H1 (cell line): ENCODE measurements at regions of chr11 and their contacts with region 1.

Region 1: GRCh38 chr11:57249384-57250319 is 12.6 kb upstream of the APLNR start:
- DNase-seq: peak in 1 of 2 experiments; percentile 87
- H3K4me3 ChIP-seq: no peak overlapping the region
- H3K27ac ChIP-seq: no peak overlapping the region
- H3K4me1 ChIP-seq: peaks cover 0 to 2% (median 0%) of the 10 kb centered on the region in 4 experiments; a peak in 1 of 7 replicates
- H3K27me3 ChIP-seq: no peaks in the 10 kb centered on the region
- CTCF ChIP-seq: peak; percentile 78 to 86 (median 84)
- EP300 ChIP-seq: no peak
- POLR2A ChIP-seq: no peak
- RAD21 ChIP-seq: peak; percentile 91 to 97

Region 2: GRCh38 chr11:57085611-57086010 is 164.0 kb before region 1 on chr11:
- CTCF ChIA-PET with region 1: interaction called, 13 read pairs
- POLR2A ChIA-PET with region 1: no interaction called
- DNase-seq: no peak
- H3K4me3 ChIP-seq: no peak overlapping the region
- H3K27ac ChIP-seq: no peak overlapping the region
- H3K4me1 ChIP-seq: no peaks in the 10 kb centered on the region
- H3K27me3 ChIP-seq: no peaks in the 10 kb centered on the region
- CTCF ChIP-seq: no peak
- EP300 ChIP-seq: no peak
- POLR2A ChIP-seq: no peak
- RAD21 ChIP-seq: no peak

Region 3: DNA sequence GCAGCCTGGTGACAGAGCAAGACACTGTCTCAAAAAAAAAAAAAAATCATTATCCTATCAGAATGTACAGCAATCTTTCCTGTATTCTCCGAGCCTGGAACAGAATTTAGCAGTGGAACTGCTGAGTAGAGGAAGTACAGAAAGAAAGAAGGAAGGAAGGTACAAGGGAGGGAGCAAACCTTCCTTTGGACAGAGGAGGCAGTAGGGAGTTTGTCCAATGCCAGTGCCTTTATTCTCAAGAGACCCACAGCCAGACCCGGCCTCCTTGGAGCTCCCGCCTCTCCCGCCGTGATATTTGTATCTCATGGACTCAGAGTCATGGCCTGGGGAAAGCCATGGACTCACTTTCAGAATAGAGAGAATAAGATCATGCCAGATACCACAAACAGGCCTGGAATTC is 105.6 kb before region 1 on chr11:
- CTCF ChIA-PET with region 1: interaction called, 942 read pairs
- POLR2A ChIA-PET with region 1: no interaction called
- DNase-seq: no peak
- H3K4me3 ChIP-seq: no peak overlapping the region
- H3K27ac ChIP-seq: no peak overlapping the region
- H3K4me1 ChIP-seq: no peaks in the 10 kb centered on the region
- H3K27me3 ChIP-seq: no peaks in the 10 kb centered on the region
- CTCF ChIP-seq: peak in 1 of 3 experiments; percentile 38; a peak in 1 of 4 replicates
- EP300 ChIP-seq: no peak
- POLR2A ChIP-seq: no peak
- RAD21 ChIP-seq: no peak

Region 4: GRCh38 chr11:57181678-57182305 is 67.9 kb before region 1 on chr11 and contains the start of gene LRRC55:
- CTCF ChIA-PET with region 1: interaction called, 30 read pairs
- POLR2A ChIA-PET with region 1: no interaction called
- DNase-seq: no peak
- H3K4me3 ChIP-seq: peak within 1 kb of the TSS; percentile 43 to 77 (median 62); a peak in 5 of 8 replicates
- H3K27ac ChIP-seq: no peak within 1 kb of the TSS
- H3K4me1 ChIP-seq: peaks cover 0 to 6% (median 3%) of the 10 kb centered on the region in 4 experiments; a peak in 5 of 7 replicates
- H3K27me3 ChIP-seq: peaks cover 3 to 27% (median 23%) of the 10 kb centered on the region in 4 experiments
- CTCF ChIP-seq: no peak
- EP300 ChIP-seq: no peak
- POLR2A ChIP-seq: no peak
- RAD21 ChIP-seq: no peak
- total RNA-seq, gene LRRC55: 1.1 and 1.4 TPM in 2 replicates

Region 5: GRCh38 chr11:57230791-57231538 is 18.7 kb before region 1 on chr11:
- CTCF ChIA-PET with region 1: interaction called, 47 read pairs
- POLR2A ChIA-PET with region 1: no interaction called
- DNase-seq: no peak
- H3K4me3 ChIP-seq: no peak overlapping the region
- H3K27ac ChIP-seq: no peak overlapping the region
- H3K4me1 ChIP-seq: peaks cover 0 to 4% (median 0%) of the 10 kb centered on the region in 4 experiments; a peak in 2 of 7 replicates
- H3K27me3 ChIP-seq: no peaks in the 10 kb centered on the region; a peak in 3 of 7 replicates
- CTCF ChIP-seq: no peak
- EP300 ChIP-seq: no peak
- POLR2A ChIP-seq: no peak
- RAD21 ChIP-seq: no peak

Region 6: DNA sequence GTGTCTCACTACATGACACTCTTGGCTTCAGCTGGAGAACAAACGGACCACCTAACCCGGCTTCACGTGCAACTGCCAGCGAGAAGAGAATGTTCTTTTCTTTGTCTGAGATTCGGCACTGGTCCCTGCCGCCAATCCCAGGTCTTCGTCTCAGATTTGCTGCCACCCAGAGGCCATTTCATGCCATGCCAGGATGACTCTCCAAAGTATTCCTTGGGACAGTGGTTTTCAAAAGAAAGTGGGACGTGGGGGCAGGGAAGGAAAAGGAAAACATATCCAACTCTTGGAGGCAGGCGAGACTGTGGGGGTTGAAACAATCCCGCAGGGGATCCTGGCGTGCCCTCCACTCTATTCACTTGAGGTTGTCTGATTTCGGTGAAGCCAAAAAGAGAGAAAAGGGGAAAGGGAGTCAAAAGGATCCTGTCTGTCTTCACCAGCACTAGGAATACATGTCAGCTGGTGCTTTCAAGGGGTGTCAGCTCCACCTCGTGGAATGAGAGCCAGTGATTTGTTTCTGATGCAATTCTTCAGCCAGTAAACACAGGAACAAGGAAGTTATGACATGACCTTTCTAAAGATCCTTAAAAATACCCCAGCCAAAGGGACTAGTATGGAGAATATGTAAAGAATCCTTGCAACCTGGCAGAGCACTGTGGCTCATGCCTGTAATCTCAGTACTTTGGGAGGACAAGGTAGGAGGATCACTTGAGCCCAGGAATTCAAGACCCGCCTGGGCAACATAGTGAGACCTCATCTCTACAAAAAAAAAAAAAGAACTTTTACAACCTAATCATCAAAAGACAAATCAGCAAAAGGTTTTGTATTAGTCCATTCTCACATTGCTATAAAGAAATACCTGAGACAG is 28.4 kb after region 1 on chr11:
- CTCF ChIA-PET with region 1: interaction called, 41 read pairs
- POLR2A ChIA-PET with region 1: interaction called, 3 read pairs
- DNase-seq: peak; percentile 43 to 84
- H3K4me3 ChIP-seq: peak overlapping the region in 1 of 4 experiments; percentile 37; a peak in 3 of 8 replicates
- H3K27ac ChIP-seq: peak overlapping the region; percentile 37; the same call in 1 of the 2 replicates
- H3K4me1 ChIP-seq: peaks cover 2 to 10% (median 5%) of the 10 kb centered on the region in 4 experiments; a peak in 6 of 7 replicates
- H3K27me3 ChIP-seq: peaks cover 0 to 2% (median 0%) of the 10 kb centered on the region in 4 experiments; a peak in 3 of 7 replicates
- CTCF ChIP-seq: peak; percentile 71 to 91 (median 72)
- EP300 ChIP-seq: no peak
- POLR2A ChIP-seq: peak in 1 of 2 experiments; percentile 25; a peak in 1 of 3 replicates
- RAD21 ChIP-seq: peak; percentile 70 to 75

Region 7: DNA sequence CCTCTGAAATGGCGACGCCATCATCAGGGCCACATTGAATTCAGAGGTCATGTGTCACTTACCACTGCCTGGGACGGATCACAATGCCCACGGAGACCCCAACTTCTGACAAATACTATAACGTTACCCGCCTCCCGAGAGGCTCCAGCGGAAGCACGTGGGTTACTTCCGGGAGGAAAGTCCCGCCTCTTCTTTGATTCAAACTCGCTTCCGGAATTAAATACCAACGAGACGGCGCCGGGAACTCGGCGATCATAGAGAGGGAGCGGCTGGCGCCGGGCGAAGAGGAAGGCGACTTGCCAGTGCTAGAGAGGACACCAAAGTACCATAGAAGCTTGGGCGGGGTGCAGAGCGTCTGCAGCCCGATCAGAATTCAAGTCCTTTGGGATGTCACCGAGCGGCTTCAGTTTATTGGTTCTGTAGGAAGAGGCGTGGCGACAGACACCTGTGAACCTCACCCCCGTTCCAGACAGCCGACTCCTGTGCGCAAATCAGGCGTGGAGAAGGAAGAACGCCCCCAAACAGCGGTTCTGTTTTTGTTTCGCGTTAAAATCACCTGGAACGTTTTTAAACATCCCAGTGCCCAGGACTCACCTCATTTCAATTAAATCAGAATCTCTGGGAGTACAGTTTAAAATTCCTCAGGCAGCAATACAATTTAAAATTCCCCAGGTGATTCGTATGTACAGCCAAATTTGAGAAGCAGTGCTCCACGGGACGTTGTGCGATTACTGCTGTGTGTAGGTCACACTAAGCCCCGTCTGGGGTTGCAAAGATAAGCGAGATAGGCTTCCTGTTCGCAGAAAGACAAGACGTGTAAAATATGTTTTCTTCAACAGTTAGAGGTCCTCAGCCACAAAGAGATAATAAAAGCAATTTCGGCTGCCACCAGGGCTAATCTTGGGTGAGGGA is 281.2 kb after region 1 on chr11 and contains the start of gene TIMM10:
- CTCF ChIA-PET with region 1: no interaction called
- POLR2A ChIA-PET with region 1: no interaction called
- DNase-seq: peak; percentile 87 to 98
- H3K4me3 ChIP-seq: peak within 1 kb of the TSS; percentile 88 to 99 (median 96)
- H3K27ac ChIP-seq: peak within 1 kb of the TSS; percentile 49
- H3K4me1 ChIP-seq: peaks cover 0 to 7% (median 3%) of the 10 kb centered on the region in 4 experiments; a peak in 4 of 7 replicates
- H3K27me3 ChIP-seq: no peaks in the 10 kb centered on the region
- CTCF ChIP-seq: no peak
- EP300 ChIP-seq: peak in 1 of 2 experiments; percentile 26; a peak in 1 of 3 replicates
- POLR2A ChIP-seq: peak in 1 of 2 experiments; percentile 65; a peak in 1 of 3 replicates
- RAD21 ChIP-seq: peak in 1 of 2 experiments; percentile 13; a peak in 1 of 4 replicates
- total RNA-seq, gene TIMM10: 109 and 117 TPM in 2 replicates